Mammary epithelial cell (primary cell): ENCODE measurements at regions of chr4 and their contacts with region 1.

Region 1: GRCh38 chr4:48180234-48180633 is 46.2 kb upstream of the TXK start:
- DNase-seq: no peak
- H3K4me3 ChIP-seq: no peak overlapping the region
- H3K27ac ChIP-seq: no peak overlapping the region
- H3K4me1 ChIP-seq: peaks cover 7% of the 10 kb centered on the region
- H3K27me3 ChIP-seq: no peaks in the 10 kb centered on the region
- CTCF ChIP-seq: no peak

Region 2: DNA sequence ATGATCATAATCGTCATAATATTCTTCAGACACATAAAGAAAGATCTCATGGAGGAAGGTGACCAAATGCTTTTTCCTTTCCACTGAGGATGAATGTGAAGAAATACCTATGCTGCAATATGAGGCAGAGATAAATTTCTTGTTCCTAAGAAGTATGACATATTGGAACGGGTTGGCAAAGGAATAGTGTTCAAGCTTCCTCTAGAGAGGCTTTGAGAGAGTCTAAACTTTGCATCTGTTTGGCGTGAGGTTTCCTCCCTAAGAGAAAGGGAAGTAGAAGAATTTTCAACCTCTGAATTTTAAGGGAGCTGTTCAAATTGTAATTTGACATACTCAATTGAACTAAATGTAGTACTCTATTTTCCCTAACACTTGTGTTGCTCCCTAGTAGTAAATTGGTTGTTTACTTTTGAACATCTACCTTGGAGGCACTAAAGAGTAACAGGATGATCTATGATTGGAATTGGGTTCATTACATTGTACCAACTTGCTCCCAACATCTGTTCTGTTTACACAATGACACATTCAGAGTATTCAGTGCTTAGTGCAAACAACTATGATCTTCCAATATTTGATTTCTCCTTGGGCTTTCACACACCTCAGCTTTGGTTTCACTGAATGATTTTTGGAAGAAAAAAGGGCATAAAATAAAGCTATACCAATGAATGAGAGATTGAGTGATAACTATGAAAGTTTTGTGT is 464.4 kb before region 1 on chr4:
- CTCF ChIA-PET with region 1: no interaction called
- dilution Hi-C with region 1: no loop called
- in situ Hi-C with region 1: no loop called
- intact Hi-C with region 1: no loop called
- DNase-seq: no peak
- H3K4me3 ChIP-seq: no peak overlapping the region
- H3K27ac ChIP-seq: no peak overlapping the region
- H3K4me1 ChIP-seq: no peaks in the 10 kb centered on the region
- H3K27me3 ChIP-seq: peaks cover 6% of the 10 kb centered on the region
- CTCF ChIP-seq: no peak

Region 3: GRCh38 chr4:47752214-47752613 is 428.0 kb before region 1 on chr4:
- CTCF ChIA-PET with region 1: no interaction called
- dilution Hi-C with region 1: no loop called
- in situ Hi-C with region 1: no loop called
- intact Hi-C with region 1: no loop called
- DNase-seq: no peak
- H3K4me3 ChIP-seq: no peak overlapping the region
- H3K27ac ChIP-seq: no peak overlapping the region
- H3K4me1 ChIP-seq: no peaks in the 10 kb centered on the region
- H3K27me3 ChIP-seq: peaks cover 10% of the 10 kb centered on the region
- CTCF ChIP-seq: no peak

Region 4: DNA sequence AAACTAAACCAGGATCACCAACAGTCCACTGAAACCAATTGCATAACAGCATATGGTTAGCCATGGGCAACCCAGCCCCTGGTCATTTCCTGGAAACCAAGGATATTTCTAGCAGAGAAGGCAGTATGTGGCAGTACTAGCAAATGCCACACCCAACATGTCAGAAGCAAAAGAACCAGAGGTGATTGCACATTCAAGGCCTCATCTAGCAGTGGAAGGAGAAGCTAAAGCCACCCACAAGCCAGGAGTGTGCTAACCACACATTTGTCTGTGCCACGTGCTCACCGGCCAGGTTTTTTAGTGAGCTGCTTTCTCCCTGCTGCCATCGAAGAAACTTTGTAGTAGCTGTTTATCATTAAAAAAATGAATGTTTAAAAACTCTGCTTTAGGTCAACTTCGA is 47.4 kb after region 1 on chr4:
- CTCF ChIA-PET with region 1: no interaction called
- dilution Hi-C with region 1: loop called (anchors 5 kb)
- in situ Hi-C with region 1: no loop called
- intact Hi-C with region 1: no loop called
- DNase-seq: peak; percentile 25
- H3K4me3 ChIP-seq: no peak overlapping the region
- H3K27ac ChIP-seq: no peak overlapping the region
- H3K4me1 ChIP-seq: peaks cover 12% of the 10 kb centered on the region
- H3K27me3 ChIP-seq: no peaks in the 10 kb centered on the region
- CTCF ChIP-seq: no peak

Region 5: DNA sequence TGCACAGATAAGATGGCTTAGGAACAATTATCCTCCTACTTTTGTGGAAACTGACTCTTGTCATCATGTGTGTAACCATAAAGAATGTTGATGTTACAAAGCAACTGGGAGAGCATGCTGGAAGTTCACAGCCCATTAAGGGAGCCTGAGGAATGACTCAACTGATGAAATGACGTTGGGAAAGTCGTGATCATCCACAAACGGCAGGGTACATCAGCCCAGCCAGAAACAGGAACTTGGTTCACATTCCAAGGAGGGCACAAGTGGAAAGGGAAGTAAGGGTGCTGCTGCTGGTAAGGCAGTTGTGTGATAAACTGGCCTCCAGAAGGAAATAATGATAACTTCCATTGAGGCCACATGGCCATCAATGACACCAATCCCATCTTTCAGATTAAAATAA is 82.7 kb after region 1 on chr4:
- CTCF ChIA-PET with region 1: no interaction called
- dilution Hi-C with region 1: loop called (anchors 5 kb)
- in situ Hi-C with region 1: no loop called
- intact Hi-C with region 1: no loop called
- DNase-seq: no peak
- H3K4me3 ChIP-seq: no peak overlapping the region
- H3K27ac ChIP-seq: no peak overlapping the region
- H3K4me1 ChIP-seq: no peaks in the 10 kb centered on the region
- H3K27me3 ChIP-seq: no peaks in the 10 kb centered on the region
- CTCF ChIP-seq: no peak